ENCODE measurements at regions of chr10 and their contacts with region 1.

Region 1: GRCh38 chr10:7696545-7696944 is 6.6 kb upstream of the ITIH2 start:
- DNase-seq: peak; percentile 82
- ATAC-seq: peak; percentile 69
- H3K4me3 ChIP-seq: no peak overlapping the region
- H3K27ac ChIP-seq: peak overlapping the region; percentile 46
- H3K4me1 ChIP-seq: peaks cover 59% of the 10 kb centered on the region
- H3K27me3 ChIP-seq: no peaks in the 10 kb centered on the region
- CTCF ChIP-seq: no peak
- EP300 ChIP-seq: peak in 1 of 2 experiments; percentile 37; a peak in 1 of 4 replicates
- POLR2A ChIP-seq: no peak
- RAD21 ChIP-seq: 0 out of 2 replicates have a peak, but pooled peaks have one; percentile 13

Region 2: GRCh38 chr10:7533657-7534479 is 162.7 kb before region 1 on chr10:
- CTCF ChIA-PET with region 1: no interaction called
- POLR2A ChIA-PET with region 1: interaction called, 5 read pairs
- in situ Hi-C with region 1: no loop called
- intact Hi-C with region 1: loop called (anchors 2 kb)
- DNase-seq: no peak
- ATAC-seq: no peak; the same call in 2 of the 3 replicates
- H3K4me3 ChIP-seq: peak overlapping the region in 1 of 3 experiments; percentile 60; a peak in 1 of 6 replicates
- H3K27ac ChIP-seq: peak overlapping the region; percentile 63
- H3K4me1 ChIP-seq: peaks cover 20% of the 10 kb centered on the region
- H3K27me3 ChIP-seq: no peaks in the 10 kb centered on the region
- CTCF ChIP-seq: no peak
- EP300 ChIP-seq: no peak
- POLR2A ChIP-seq: no peak
- RAD21 ChIP-seq: no peak

Region 3: GRCh38 chr10:7541137-7542095 is 155.1 kb before region 1 on chr10:
- CTCF ChIA-PET with region 1: no interaction called
- POLR2A ChIA-PET with region 1: interaction called, 13 read pairs
- in situ Hi-C with region 1: no loop called
- intact Hi-C with region 1: no loop called
- DNase-seq: peak; percentile 93
- ATAC-seq: peak; percentile 92
- H3K4me3 ChIP-seq: peak overlapping the region; percentile 36 to 66 (median 47)
- H3K27ac ChIP-seq: peak overlapping the region; percentile 86
- H3K4me1 ChIP-seq: peaks cover 56% of the 10 kb centered on the region
- H3K27me3 ChIP-seq: no peaks in the 10 kb centered on the region
- CTCF ChIP-seq: peak; percentile 53
- EP300 ChIP-seq: peak; percentile 61 to 89
- POLR2A ChIP-seq: peak in 1 of 2 experiments; percentile 68; a peak in 2 of 4 replicates
- RAD21 ChIP-seq: peak; percentile 58; the same call in 1 of the 2 replicates

Region 4: GRCh38 chr10:7666253-7667081 is 30.1 kb before region 1 on chr10 and contains the start of gene ITIH5:
- CTCF ChIA-PET with region 1: no interaction called
- POLR2A ChIA-PET with region 1: interaction called, 13 read pairs
- in situ Hi-C with region 1: no loop called
- intact Hi-C with region 1: no loop called
- DNase-seq: no peak
- ATAC-seq: peak; percentile 73
- H3K4me3 ChIP-seq: peak within 1 kb of the TSS; percentile 78 to 80 (median 78)
- H3K27ac ChIP-seq: no peak within 1 kb of the TSS
- H3K4me1 ChIP-seq: peaks cover 21% of the 10 kb centered on the region
- H3K27me3 ChIP-seq: peaks cover 0 to 23% of the 10 kb centered on the region in 2 experiments; a peak in 2 of 5 replicates
- CTCF ChIP-seq: no peak
- EP300 ChIP-seq: no peak
- POLR2A ChIP-seq: no peak
- RAD21 ChIP-seq: no peak
- total RNA-seq, gene ITIH5: 3.5 and 8.9 TPM in 2 replicates

Region 5: DNA sequence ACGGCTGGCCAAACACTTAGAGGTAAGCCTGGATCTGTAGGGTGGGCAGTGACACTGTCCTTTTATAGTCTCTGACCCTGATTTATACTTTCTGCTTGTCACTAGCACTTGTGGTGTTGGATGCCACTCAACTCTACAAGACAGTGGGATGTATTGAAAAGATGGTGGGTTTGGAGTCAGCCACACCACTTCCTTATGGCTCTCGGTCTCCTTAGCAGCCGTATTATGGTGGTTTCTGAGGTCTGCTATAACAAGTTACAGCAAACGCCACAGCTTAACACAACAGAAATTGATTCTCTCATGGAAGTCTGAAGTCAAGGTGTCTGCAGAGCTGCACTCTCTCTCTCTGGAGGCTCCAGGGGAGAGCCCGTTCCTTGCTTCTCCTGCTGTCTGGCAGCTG is 21.2 kb after region 1 on chr10:
- CTCF ChIA-PET with region 1: no interaction called
- POLR2A ChIA-PET with region 1: interaction called, 12 read pairs
- in situ Hi-C with region 1: no loop called
- intact Hi-C with region 1: no loop called
- DNase-seq: no peak
- ATAC-seq: no peak
- H3K4me3 ChIP-seq: no peak overlapping the region
- H3K27ac ChIP-seq: no peak overlapping the region
- H3K4me1 ChIP-seq: 0 out of 2 replicates have a peak, but pooled peaks cover 19% of the 10 kb centered on the region
- H3K27me3 ChIP-seq: no peaks in the 10 kb centered on the region
- CTCF ChIP-seq: no peak
- EP300 ChIP-seq: no peak
- POLR2A ChIP-seq: no peak; a peak in 1 of 4 replicates
- RAD21 ChIP-seq: no peak

Region 6: GRCh38 chr10:7797582-7797981 is 101.0 kb after region 1 on chr10:
- CTCF ChIA-PET with region 1: no interaction called
- POLR2A ChIA-PET with region 1: no interaction called
- in situ Hi-C with region 1: no loop called
- intact Hi-C with region 1: loop called (anchors 10 kb)
- DNase-seq: no peak
- ATAC-seq: no peak
- H3K4me3 ChIP-seq: no peak overlapping the region
- H3K27ac ChIP-seq: no peak overlapping the region
- H3K4me1 ChIP-seq: peaks cover 43% of the 10 kb centered on the region
- H3K27me3 ChIP-seq: no peaks in the 10 kb centered on the region
- CTCF ChIP-seq: no peak
- EP300 ChIP-seq: no peak
- POLR2A ChIP-seq: no peak
- RAD21 ChIP-seq: no peak

Region 7: DNA sequence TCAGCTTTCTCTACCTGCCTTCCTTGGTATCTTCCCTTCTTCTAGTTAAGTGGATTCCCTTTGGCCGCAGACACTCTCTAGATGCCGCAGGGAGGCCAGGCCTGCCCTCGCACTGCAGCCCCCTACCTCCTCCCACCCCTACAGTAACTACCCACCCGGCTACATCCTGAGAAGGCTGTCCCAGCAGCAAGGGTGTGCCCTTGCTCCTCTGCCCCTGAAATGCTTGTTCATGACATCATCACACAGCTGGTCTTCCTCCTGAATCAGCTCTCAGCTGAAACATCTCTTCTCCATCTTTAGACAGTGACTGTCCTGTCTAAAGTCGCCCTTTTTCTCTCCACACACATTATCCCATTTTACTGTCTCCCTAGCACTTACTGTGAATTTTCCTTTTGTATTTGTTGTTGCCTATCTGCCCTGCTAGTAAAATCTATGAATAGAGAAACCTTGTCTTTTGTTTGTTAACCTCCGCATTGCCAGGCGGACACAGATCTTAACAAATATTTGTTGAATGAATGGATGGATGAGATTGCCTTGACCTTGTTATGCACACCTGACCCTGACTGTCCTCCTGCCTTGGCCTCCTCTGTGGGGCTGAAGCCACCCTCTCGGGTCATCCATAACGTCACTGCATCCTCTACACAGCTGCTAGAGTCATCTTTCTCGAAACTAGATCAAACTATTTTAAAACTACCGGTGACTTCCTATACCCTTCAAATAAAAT is 249.1 kb after region 1 on chr10:
- CTCF ChIA-PET with region 1: no interaction called
- POLR2A ChIA-PET with region 1: no interaction called
- in situ Hi-C with region 1: no loop called
- intact Hi-C with region 1: no loop called
- DNase-seq: peak; percentile 41
- ATAC-seq: peak; percentile 10; the same call in 2 of the 3 replicates
- H3K4me3 ChIP-seq: no peak overlapping the region
- H3K27ac ChIP-seq: no peak overlapping the region
- H3K4me1 ChIP-seq: peaks cover 48% of the 10 kb centered on the region
- H3K27me3 ChIP-seq: no peaks in the 10 kb centered on the region
- CTCF ChIP-seq: no peak
- EP300 ChIP-seq: no peak
- POLR2A ChIP-seq: no peak
- RAD21 ChIP-seq: no peak

Region 8: DNA sequence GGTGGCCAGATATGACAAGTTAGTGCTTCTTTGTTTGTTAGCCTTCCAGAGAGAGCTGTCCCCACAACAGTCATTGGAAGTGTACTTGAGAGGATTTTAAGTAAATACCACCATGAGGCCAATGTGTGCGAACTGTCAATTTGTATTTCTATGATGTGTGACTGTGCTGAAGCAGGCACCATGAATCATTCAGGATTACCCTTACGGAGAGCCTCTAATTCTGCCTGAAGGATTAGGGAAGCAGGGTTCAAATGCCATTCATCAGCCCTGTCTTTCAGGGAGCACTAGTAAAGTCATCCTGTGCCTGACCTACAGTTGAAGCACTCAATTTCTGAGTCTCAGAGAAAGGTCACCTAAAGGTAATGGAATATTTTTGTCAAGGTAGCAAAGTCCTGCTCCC is 467.3 kb after region 1 on chr10:
- CTCF ChIA-PET with region 1: no interaction called
- POLR2A ChIA-PET with region 1: no interaction called
- in situ Hi-C with region 1: no loop called
- intact Hi-C with region 1: no loop called
- DNase-seq: no peak
- ATAC-seq: no peak
- H3K4me3 ChIP-seq: no peak overlapping the region
- H3K27ac ChIP-seq: no peak overlapping the region
- H3K4me1 ChIP-seq: no peaks in the 10 kb centered on the region
- H3K27me3 ChIP-seq: no peaks in the 10 kb centered on the region; a peak in 1 of 5 replicates
- CTCF ChIP-seq: no peak
- EP300 ChIP-seq: no peak
- POLR2A ChIP-seq: no peak
- RAD21 ChIP-seq: no peak

Measured in HepG2 (cell line).